ENCODE measurements at regions of chr5 and their contacts with region 1.

Region 1: GRCh38 chr5:4150067-4150466 is 554.4 kb downstream of the IRX1 start:
- DNase-seq: no peak

Region 2: DNA sequence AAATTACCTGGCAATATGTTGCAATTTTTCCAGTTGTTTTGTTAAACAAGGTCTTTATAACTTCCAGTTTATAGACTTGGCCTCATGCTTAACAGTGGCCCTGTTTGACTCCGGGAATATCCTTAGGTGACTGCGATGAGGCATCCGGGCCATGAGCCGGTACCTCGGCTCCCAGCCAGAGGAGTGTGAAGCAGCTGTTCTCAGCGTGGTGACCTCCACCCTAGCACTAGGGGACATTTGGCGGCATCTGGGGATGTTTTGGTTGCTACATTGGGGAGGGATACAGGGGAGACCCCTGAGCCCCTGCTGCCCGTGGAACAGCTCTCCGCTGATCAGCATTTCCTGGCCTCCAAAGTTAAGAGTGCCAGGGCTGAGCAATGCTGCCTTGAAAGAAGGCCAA is 21.1 kb before region 1 on chr5:
- intact Hi-C with region 1: loop called in 1 of 2 experiments (anchors 2 kb)
- DNase-seq: no peak